Activated B cell treated with CpG ODN at 0.5 μM for 24 hours (primary cell): ENCODE measurements at regions of chr4 and their contacts with region 1.

Region 1: DNA sequence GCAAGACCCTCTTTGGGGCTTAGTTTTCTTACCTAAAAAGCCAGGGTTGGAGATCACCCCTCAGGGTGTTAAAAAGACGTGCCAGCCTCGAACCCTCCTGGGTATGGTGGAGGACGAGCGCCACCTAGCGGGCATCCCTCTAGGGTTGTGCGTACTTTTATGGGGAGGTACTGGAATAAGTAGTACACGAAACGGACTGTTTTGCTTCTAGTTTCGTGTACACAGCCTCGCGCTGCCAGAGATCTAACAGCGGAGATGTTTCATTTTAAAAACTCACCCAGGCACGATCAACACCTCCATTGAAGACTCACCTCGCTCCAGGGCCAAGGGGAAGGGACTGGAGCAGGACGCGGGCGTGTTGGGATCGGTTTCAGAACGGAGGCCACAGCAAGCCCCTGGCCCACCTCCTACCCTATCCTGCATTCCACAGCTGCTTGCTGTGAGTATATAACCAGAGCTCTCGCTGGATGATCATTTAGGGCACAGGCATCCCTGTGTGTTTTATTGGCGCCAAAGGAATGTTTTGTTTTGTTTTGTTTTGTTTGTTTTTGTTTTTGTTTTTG is 4.8 kb upstream of the NKX3-2 start:
- DNase-seq: peak; percentile 77
- ATAC-seq: peak; percentile 59
- H3K4me3 Mint-ChIP-seq: peak overlapping the region; percentile 62
- H3K27ac Mint-ChIP-seq: peak overlapping the region; percentile 9
- H3K4me1 Mint-ChIP-seq: peaks cover 30% of the 10 kb centered on the region
- H3K27me3 Mint-ChIP-seq: peaks cover 50% of the 10 kb centered on the region
- CTCF ChIP-seq: peak; percentile 86

Region 2: GRCh38 chr4:12729384-12729783 is 819.7 kb before region 1 on chr4:
- CTCF ChIA-PET with region 1: interaction called, 3 read pairs
- POLR2A ChIA-PET with region 1: no interaction called
- intact Hi-C with region 1: loop called (anchors 1 kb)
- DNase-seq: no peak
- ATAC-seq: no peak
- H3K4me3 Mint-ChIP-seq: no peak overlapping the region
- H3K27ac Mint-ChIP-seq: no peak overlapping the region
- H3K4me1 Mint-ChIP-seq: peaks cover 2% of the 10 kb centered on the region
- H3K27me3 Mint-ChIP-seq: peaks cover 10% of the 10 kb centered on the region
- CTCF ChIP-seq: no peak

Region 3: DNA sequence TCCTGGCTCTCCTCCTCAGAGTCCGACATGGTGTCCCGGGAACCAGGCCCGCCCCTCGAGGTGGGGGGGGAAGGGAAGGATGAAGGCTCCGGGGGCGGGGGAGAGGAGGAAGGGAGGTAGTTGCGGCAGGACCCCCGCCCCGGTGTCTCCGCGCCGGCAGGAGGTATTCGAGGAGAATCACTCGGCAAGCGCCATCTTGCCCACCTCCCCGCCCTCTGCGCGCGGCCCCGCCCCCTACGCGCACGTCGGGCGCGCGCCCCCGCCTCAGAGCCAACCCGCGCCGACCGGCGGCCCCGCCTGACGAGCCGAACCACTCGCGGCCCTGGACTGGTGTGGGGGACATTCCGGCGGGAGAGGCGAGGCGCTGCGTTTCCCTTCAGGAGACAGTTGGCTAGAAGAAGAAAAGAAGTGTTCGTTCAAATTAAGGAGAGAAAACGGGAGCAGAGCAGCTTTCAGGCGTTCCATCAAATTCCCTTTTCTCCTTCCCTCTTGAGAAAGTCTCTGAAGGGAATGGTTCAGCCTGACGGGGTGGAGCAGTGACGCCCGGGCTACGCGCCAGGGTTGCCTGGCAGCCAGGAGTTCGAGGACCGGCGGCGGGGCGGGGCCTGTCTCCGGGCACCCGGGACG is 64.8 kb before region 1 on chr4 and contains the start of gene RAB28:
- CTCF ChIA-PET with region 1: no interaction called
- POLR2A ChIA-PET with region 1: no interaction called
- intact Hi-C with region 1: loop called (anchors 1 kb)
- DNase-seq: peak; percentile 93
- ATAC-seq: peak; percentile 93
- H3K4me3 Mint-ChIP-seq: peak within 1 kb of the TSS; percentile 96
- H3K27ac Mint-ChIP-seq: peak within 1 kb of the TSS; percentile 99
- H3K4me1 Mint-ChIP-seq: peaks cover 21% of the 10 kb centered on the region
- H3K27me3 Mint-ChIP-seq: peaks cover 14% of the 10 kb centered on the region
- CTCF ChIP-seq: no peak
- total RNA-seq, gene RAB28: 16.0 and 16.9 TPM in 2 replicates

Region 4: DNA sequence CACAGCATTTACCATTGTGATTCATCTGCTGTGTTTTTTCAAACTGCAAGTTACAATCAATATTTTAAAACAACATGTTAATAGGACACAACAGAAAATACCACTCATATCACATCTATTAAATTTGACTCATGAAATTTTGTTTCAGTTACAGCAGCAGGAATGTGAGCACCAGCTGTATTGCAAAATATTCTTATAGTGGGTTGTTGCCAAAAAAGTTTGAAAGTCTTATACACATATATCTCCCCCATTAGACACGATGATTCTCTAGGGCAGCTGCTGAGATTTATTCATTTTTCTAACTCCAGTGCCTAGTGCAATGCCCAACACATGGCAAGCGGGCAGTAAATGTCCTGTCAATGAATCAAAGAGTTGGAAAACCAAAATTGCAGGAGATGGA is 21.9 kb after region 1 on chr4:
- CTCF ChIA-PET with region 1: no interaction called
- POLR2A ChIA-PET with region 1: no interaction called
- intact Hi-C with region 1: no loop called
- DNase-seq: no peak
- ATAC-seq: no peak
- H3K4me3 Mint-ChIP-seq: no peak overlapping the region
- H3K27ac Mint-ChIP-seq: no peak overlapping the region
- H3K4me1 Mint-ChIP-seq: no peaks in the 10 kb centered on the region
- H3K27me3 Mint-ChIP-seq: no peaks in the 10 kb centered on the region
- CTCF ChIP-seq: no peak

Region 5: GRCh38 chr4:13611283-13611842 is 62.3 kb after region 1 on chr4:
- CTCF ChIA-PET with region 1: no interaction called
- POLR2A ChIA-PET with region 1: no interaction called
- intact Hi-C with region 1: loop called (anchors 5 kb)
- DNase-seq: no peak
- ATAC-seq: peak; percentile 90
- H3K4me3 Mint-ChIP-seq: peak overlapping the region; percentile 62
- H3K27ac Mint-ChIP-seq: peak overlapping the region; percentile 88
- H3K4me1 Mint-ChIP-seq: peaks cover 57% of the 10 kb centered on the region
- H3K27me3 Mint-ChIP-seq: no peaks in the 10 kb centered on the region
- CTCF ChIP-seq: no peak

Region 6: GRCh38 chr4:13642170-13642950 is 93.3 kb after region 1 on chr4:
- CTCF ChIA-PET with region 1: no interaction called
- POLR2A ChIA-PET with region 1: no interaction called
- intact Hi-C with region 1: no loop called
- DNase-seq: no peak
- ATAC-seq: no peak
- H3K4me3 Mint-ChIP-seq: no peak overlapping the region
- H3K27ac Mint-ChIP-seq: no peak overlapping the region
- H3K4me1 Mint-ChIP-seq: no peaks in the 10 kb centered on the region
- H3K27me3 Mint-ChIP-seq: peaks cover 26% of the 10 kb centered on the region
- CTCF ChIP-seq: no peak